K562 (cell line): ENCODE measurements at regions of chr12 and their contacts with region 1.

Region 1: DNA sequence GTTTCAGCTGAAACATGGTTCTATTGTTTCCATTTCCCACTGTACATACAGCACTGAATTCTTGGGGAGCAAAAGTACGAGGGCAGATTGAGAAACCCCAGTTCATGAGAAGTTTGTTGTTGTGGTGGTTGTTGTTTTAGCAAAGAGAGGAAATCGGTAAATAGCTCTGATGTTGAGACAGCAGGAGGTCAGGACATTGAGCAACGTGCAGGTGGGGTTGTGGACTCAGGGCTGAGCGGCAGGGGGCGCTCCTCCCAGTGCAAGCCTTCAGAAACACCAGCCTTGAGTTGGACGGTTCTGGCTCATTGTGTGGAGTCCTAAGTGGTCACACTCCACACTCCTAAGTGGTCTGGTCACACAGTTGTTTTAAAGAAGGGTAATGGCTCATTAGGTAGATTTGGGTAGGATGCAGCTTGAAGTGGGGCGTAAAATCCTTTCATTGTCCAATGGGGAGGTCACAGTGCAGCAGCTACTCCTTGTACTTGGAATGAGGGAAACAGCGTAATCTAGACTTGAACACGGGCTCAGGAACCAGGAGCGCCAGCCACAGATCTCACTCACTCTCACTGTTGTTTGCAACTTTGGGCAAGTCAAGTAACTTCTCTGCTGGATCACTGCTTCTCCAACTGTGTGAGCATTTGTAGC is 14.5 kb upstream of the PWP1 start:
- DNase-seq: peak; percentile 53 to 64 (median 59)
- ATAC-seq: peak; percentile 95
- H3K4me3 ChIP-seq: no peak overlapping the region
- H3K27ac ChIP-seq: no peak overlapping the region
- H3K4me1 ChIP-seq: no peaks in the 10 kb centered on the region
- H3K27me3 ChIP-seq: peaks cover 23 to 45% of the 10 kb centered on the region in 2 experiments
- CTCF ChIP-seq: peak; percentile 73 to 94 (median 73)
- EP300 ChIP-seq: no peak
- POLR2A ChIP-seq: no peak
- RAD21 ChIP-seq: peak in 1 of 2 experiments; percentile 42; a peak in 1 of 4 replicates

Region 2: GRCh38 chr12:107503887-107504885 is 166.9 kb before region 1 on chr12:
- CTCF ChIA-PET with region 1: no interaction called
- POLR2A ChIA-PET with region 1: no interaction called
- in situ Hi-C with region 1: no loop called
- intact Hi-C with region 1: no loop called
- DNase-seq: no peak
- ATAC-seq: no peak
- H3K4me3 ChIP-seq: no peak overlapping the region
- H3K27ac ChIP-seq: no peak overlapping the region
- H3K4me1 ChIP-seq: no peaks in the 10 kb centered on the region
- H3K27me3 ChIP-seq: peaks cover 2 to 11% of the 10 kb centered on the region in 2 experiments; a peak in 2 of 5 replicates
- CTCF ChIP-seq: no peak
- EP300 ChIP-seq: no peak
- POLR2A ChIP-seq: no peak
- RAD21 ChIP-seq: no peak

Region 3: GRCh38 chr12:107635139-107635538 is 36.0 kb before region 1 on chr12:
- CTCF ChIA-PET with region 1: no interaction called
- POLR2A ChIA-PET with region 1: no interaction called
- in situ Hi-C with region 1: no loop called
- intact Hi-C with region 1: no loop called
- DNase-seq: no peak
- ATAC-seq: no peak
- H3K4me3 ChIP-seq: no peak overlapping the region
- H3K27ac ChIP-seq: no peak overlapping the region
- H3K4me1 ChIP-seq: no peaks in the 10 kb centered on the region
- H3K27me3 ChIP-seq: peaks cover 2 to 18% of the 10 kb centered on the region in 2 experiments; a peak in 2 of 5 replicates
- CTCF ChIP-seq: no peak
- EP300 ChIP-seq: no peak
- POLR2A ChIP-seq: no peak
- RAD21 ChIP-seq: no peak

Region 4: DNA sequence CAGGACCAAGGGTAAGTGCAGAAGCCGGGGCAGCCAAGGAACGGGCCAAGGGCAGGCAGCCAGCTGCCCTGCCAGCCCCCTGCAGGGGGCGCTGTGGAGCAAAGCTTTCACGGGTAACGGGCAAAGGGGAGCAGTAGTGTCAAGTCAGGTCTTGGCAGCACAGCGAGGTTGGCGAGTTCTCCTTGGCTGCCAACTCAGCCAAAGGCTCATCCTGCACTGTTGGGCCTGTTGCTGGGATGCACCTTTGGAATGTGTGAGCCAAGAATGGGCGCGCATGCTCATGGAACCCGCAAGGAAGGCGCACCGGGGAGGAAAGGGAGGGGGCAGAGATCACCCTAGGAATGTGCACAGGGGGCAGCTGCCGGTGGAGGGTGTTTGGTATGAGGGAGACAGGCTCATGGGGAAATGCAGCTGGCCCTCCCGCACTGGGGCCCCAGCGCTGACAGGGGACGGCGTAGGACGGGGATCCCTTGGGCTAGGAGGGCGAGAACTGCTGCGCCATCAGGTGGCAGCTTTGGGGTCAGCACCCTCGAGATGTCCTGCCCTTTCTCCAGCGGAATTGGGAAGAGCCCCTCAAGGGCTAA is 241.4 kb after region 1 on chr12:
- CTCF ChIA-PET with region 1: interaction called, 4 read pairs
- POLR2A ChIA-PET with region 1: no interaction called
- in situ Hi-C with region 1: no loop called
- intact Hi-C with region 1: loop called (anchors 10 kb)
- DNase-seq: peak; percentile 83 to 89 (median 86)
- ATAC-seq: peak; percentile 95
- H3K4me3 ChIP-seq: peak overlapping the region; percentile 48
- H3K27ac ChIP-seq: no peak overlapping the region
- H3K4me1 ChIP-seq: peaks cover 8 to 10% of the 10 kb centered on the region in 2 experiments; a peak in 4 of 5 replicates
- H3K27me3 ChIP-seq: peaks cover 21 to 27% of the 10 kb centered on the region in 2 experiments; a peak in 4 of 5 replicates
- CTCF ChIP-seq: peak; percentile 93 to 99 (median 94)
- EP300 ChIP-seq: no peak
- POLR2A ChIP-seq: no peak
- RAD21 ChIP-seq: peak; percentile 30 to 50; a peak in 3 of 4 replicates